Activated T-helper 2 cell treated with anti-CD3 and anti-CD28 coated beads, Interferon-gamma antibody, Interleukin-2, Interleukin-4, amounts not matched to agents 10 μg/mL and 5 μg/mL and 100 μg/mL, durations not matched to agents 14 hours and 24 hours and 36 hours (primary cell): ENCODE measurements at regions of chr3 and their contacts with region 1.

Region 1: DNA sequence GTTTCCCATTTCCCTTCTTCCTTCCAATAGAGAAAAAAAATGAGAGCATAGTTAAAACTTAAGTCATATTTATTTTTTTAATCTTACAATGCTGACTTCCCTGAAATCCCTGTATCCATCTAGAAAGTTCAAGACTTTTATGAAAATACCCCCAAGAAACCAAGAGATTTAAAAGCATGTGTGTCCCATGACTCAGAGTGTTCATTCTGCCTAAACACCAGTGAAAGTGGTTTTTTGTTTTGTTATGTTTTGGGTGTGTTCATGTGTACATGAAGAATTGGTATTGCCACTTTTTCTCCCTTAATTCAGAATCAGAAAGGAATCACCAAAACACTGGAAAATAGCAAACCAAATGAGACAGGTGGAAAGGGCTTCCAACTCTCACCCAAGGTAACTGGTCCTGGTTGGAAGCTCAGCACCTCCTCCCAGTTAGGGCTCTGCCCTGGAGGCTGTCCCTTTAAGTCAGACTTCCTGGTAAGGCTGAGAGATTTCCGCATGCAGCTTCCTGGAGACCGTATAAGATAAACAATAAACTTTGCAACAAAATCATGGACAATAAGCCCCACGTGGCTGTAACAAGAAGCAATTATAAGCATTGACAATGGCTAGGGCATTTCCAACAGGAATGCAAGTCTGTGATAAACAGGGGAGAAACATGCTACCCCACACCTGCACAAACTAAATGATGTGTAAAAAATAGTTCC is 121.9 kb upstream of the ARHGEF3 start:
- DNase-seq: peak; percentile 37
- H3K4me3 Mint-ChIP-seq: peak overlapping the region; percentile 31
- H3K27ac Mint-ChIP-seq: peak overlapping the region; percentile 83
- H3K4me1 Mint-ChIP-seq: peaks cover 61% of the 10 kb centered on the region
- H3K27me3 Mint-ChIP-seq: no peaks in the 10 kb centered on the region

Region 2: GRCh38 chr3:56855856-56856512 is 67.7 kb before region 1 on chr3:
- intact Hi-C with region 1: no loop called
- DNase-seq: no peak
- H3K4me3 Mint-ChIP-seq: no peak overlapping the region
- H3K27ac Mint-ChIP-seq: peak overlapping the region; percentile 20
- H3K4me1 Mint-ChIP-seq: peaks cover 57% of the 10 kb centered on the region
- H3K27me3 Mint-ChIP-seq: no peaks in the 10 kb centered on the region

Region 3: GRCh38 chr3:56904552-56905215 is 19.0 kb before region 1 on chr3:
- intact Hi-C with region 1: no loop called
- DNase-seq: no peak
- H3K4me3 Mint-ChIP-seq: no peak overlapping the region
- H3K27ac Mint-ChIP-seq: no peak overlapping the region
- H3K4me1 Mint-ChIP-seq: peaks cover 57% of the 10 kb centered on the region
- H3K27me3 Mint-ChIP-seq: no peaks in the 10 kb centered on the region

Region 4: DNA sequence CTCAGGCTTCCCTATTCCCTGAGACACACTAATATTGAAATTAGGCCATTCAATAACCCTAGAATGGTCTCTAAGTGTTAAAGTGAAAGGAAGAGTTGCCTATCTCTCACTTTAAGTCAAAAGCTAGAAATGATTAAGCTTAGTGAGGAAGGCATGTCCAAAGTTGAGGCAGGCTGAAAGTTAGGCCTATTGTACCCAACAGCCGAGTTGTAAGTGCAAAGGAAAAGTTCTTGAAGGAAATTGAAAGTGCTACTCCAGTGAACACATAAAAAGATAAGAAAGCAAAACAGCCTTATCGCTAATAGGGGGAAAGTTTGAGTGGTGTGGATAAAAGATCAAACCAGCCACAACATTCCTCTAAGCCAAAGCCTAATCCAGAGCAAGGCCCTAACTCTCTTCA is 18.9 kb after region 1 on chr3:
- intact Hi-C with region 1: loop called (anchors 1 kb)
- DNase-seq: no peak
- H3K4me3 Mint-ChIP-seq: no peak overlapping the region
- H3K27ac Mint-ChIP-seq: peak overlapping the region; percentile 65
- H3K4me1 Mint-ChIP-seq: peaks cover 20% of the 10 kb centered on the region
- H3K27me3 Mint-ChIP-seq: peaks cover 10% of the 10 kb centered on the region

Region 5: DNA sequence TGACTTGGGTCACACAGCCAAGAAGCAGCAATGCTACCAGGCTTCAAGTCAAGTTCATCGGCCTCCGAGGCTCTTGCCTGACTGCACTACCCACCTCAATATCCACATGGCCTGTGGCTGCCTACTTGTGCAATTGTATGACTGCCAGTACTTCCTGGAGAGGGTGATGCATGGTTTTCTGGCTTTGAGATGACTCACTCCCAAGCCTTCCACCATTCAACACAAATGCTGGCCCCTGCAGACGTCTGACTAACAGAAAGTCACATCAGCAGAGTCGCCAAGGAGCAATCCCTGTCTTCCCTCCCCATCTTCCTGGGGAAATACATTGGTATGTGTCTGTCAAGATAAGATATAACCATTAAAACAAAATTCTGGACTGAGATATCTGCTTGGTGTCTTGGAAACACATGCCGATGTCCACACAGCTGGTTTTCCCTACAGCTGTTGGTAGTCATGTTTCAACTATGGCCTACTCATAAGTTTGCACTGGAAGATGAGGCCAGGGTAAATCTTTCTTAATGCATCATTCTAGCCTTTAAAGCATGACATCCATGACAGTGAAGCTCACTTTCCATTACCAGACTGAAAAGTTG is 57.2 kb after region 1 on chr3:
- intact Hi-C with region 1: loop called (anchors 1 kb)
- DNase-seq: peak; percentile 22
- H3K4me3 Mint-ChIP-seq: no peak overlapping the region
- H3K27ac Mint-ChIP-seq: peak overlapping the region; percentile 72
- H3K4me1 Mint-ChIP-seq: peaks cover 26% of the 10 kb centered on the region
- H3K27me3 Mint-ChIP-seq: no peaks in the 10 kb centered on the region